HCT116 (cell line): ENCODE measurements at regions of chr17 and their contacts with region 1.

Region 1: DNA sequence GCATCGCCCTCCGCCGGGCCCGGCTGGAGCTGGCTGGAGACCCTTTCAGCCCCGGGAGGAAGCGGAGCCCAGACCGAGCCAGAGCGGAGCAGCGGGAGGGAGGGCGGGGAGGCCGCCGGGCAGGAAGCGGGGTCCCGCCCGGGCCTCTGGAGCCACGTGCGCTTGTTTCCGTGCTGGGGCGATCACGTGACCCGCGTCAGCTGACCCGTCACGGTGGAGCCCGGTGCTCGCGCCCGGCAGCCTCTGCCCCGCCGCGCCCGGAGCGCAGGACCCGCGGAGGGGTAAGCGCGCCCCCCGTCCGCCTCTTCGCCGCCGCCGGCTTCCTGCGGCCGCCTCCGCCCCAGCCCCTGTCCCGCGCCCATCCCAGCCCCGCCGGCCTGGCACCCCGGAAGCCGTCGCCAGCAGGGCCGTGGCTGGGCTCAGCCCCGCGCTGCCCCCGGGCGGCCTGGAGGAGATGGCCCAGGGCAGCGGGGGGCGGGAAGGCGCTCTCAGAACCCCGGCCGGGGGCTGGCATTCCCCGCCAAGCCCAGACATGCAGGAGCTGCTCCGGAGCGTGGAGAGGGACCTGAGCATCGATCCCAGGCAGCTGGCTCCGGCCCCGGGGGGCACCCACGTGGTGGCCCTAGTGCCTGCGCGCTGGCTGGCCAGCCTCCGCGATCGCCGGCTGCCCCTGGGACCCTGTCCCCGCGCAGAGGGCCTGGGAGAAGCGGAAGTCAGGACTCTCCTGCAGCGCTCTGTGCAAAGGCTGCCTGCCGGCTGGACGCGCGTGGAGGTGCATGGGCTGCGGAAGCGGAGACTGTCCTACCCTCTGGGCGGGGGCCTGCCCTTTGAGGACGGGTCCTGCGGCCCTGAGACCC is at the start of gene WDR81:
- DNase-seq: peak; percentile 48
- ATAC-seq: peak; percentile 72
- H3K4me3 ChIP-seq: peak within 1 kb of the TSS; percentile 54 to 66
- H3K27ac ChIP-seq: peak within 1 kb of the TSS; percentile 75
- H3K4me1 ChIP-seq: peaks cover 22 to 47% of the 10 kb centered on the region in 2 experiments; a peak in 3 of 4 replicates
- H3K27me3 ChIP-seq: no peaks in the 10 kb centered on the region
- CTCF ChIP-seq: no peak
- POLR2A ChIP-seq: no peak
- RAD21 ChIP-seq: no peak
- total RNA-seq, gene WDR81: 17.3 TPM

Region 2: GRCh38 chr17:1769822-1770477 is 45.2 kb after region 1 on chr17:
- CTCF ChIA-PET with region 1: no interaction called
- POLR2A ChIA-PET with region 1: no interaction called
- RAD21 ChIA-PET with region 1: no interaction called
- intact Hi-C with region 1: loop called (anchors 5 kb)
- DNase-seq: no peak
- ATAC-seq: no peak
- H3K4me3 ChIP-seq: no peak overlapping the region
- H3K27ac ChIP-seq: no peak overlapping the region
- H3K4me1 ChIP-seq: no peaks in the 10 kb centered on the region
- H3K27me3 ChIP-seq: no peaks in the 10 kb centered on the region
- CTCF ChIP-seq: no peak
- POLR2A ChIP-seq: no peak
- RAD21 ChIP-seq: no peak

Region 3: GRCh38 chr17:1783834-1784611 is 59.3 kb after region 1 on chr17:
- CTCF ChIA-PET with region 1: interaction called, 39 read pairs
- POLR2A ChIA-PET with region 1: interaction called, 5 read pairs
- RAD21 ChIA-PET with region 1: interaction called, 3 to 9 read pairs
- intact Hi-C with region 1: loop called (anchors 1 kb)
- DNase-seq: peak; percentile 6
- ATAC-seq: peak; percentile 69
- H3K4me3 ChIP-seq: no peak overlapping the region
- H3K27ac ChIP-seq: 0 out of 2 replicates have a peak overlapping the region, but pooled peaks have one; percentile 4
- H3K4me1 ChIP-seq: peaks cover 10 to 27% of the 10 kb centered on the region in 2 experiments
- H3K27me3 ChIP-seq: no peaks in the 10 kb centered on the region
- CTCF ChIP-seq: peak; percentile 54 to 62 (median 56); a peak in 4 of 6 replicates
- POLR2A ChIP-seq: no peak
- RAD21 ChIP-seq: peak; percentile 72

Region 4: GRCh38 chr17:1865252-1866037 is 140.7 kb after region 1 on chr17:
- CTCF ChIA-PET with region 1: interaction called, 25 read pairs
- POLR2A ChIA-PET with region 1: no interaction called
- RAD21 ChIA-PET with region 1: no interaction called
- intact Hi-C with region 1: loop called (anchors 5 kb)
- DNase-seq: peak; percentile 4
- ATAC-seq: peak; percentile 78
- H3K4me3 ChIP-seq: no peak overlapping the region
- H3K27ac ChIP-seq: no peak overlapping the region
- H3K4me1 ChIP-seq: no peaks in the 10 kb centered on the region
- H3K27me3 ChIP-seq: no peaks in the 10 kb centered on the region
- CTCF ChIP-seq: peak; percentile 64 to 74 (median 67); a peak in 5 of 6 replicates
- POLR2A ChIP-seq: no peak
- RAD21 ChIP-seq: peak; percentile 67